CD14-positive monocyte (primary cell): ENCODE measurements at regions of chr20 and their contacts with region 1.

Region 1: DNA sequence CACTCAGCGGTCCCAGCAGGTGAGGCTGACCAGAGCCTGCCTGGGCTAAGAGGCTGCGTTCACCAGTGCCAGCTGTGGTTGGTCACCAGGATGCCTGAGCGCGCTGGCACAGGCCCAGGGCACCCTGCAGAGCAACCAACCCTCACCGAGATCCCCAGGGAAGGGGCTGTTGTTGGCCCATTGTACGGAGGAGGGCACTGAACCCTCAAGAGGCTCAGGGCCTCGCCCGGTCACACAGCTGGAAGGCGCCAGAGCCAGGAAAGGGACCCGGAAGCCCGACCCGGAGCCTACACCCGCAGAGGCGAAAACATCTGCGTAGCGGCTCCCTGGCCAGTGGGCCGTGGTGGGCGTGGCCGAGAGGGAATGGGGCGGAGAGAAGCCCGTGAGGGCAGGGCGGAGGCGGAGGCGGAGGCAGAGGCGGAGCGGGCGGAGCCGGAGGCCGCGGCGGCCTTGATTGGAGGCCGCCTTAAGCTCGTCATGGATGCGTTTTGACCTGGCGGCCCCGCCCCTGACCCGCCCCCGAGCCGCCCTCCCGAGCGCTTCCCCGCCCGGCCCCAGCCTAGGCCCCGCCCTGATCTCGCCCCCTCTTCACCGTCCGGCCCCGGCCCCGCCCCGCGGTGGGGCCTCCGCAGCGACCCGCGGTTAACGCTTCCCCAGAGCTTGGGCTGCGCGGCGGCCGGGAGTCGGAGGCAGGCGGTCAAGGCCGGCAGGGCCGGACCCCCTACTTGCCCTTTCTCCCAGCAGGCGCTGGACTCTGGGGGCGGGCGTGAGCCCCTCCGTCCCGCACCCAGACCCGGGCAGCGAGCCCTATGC is 2.2 kb upstream of the MRGBP start:
- DNase-seq: peak; percentile 94 to 97 (median 95)
- H3K4me3 ChIP-seq: peak overlapping the region; percentile 54 to 88 (median 59)
- H3K4me3 Mint-ChIP-seq: peak overlapping the region; percentile 82 to 87
- H3K27ac ChIP-seq: peak overlapping the region; percentile 92 to 94
- H3K27ac Mint-ChIP-seq: peak overlapping the region; percentile 92 to 99 (median 94)
- H3K4me1 ChIP-seq: peaks cover 44 to 54% of the 10 kb centered on the region in 2 donors
- H3K4me1 Mint-ChIP-seq: peaks cover 44% of the 10 kb centered on the region
- H3K27me3 ChIP-seq: no peaks in the 10 kb centered on the region
- H3K27me3 Mint-ChIP-seq: peaks cover 0 to 1% (median under 1%) of the 10 kb centered on the region in 3 donors
- CTCF ChIP-seq: no peak

Region 2: GRCh38 chr20:62407221-62407992 is 386.7 kb before region 1 on chr20 and contains the start of gene CABLES2:
- intact Hi-C with region 1: loop called (anchors 5 to 10 kb)
- DNase-seq: peak; percentile 89 to 92 (median 90)
- H3K4me3 ChIP-seq: peak within 1 kb of the TSS; percentile 52 to 79 (median 54)
- H3K4me3 Mint-ChIP-seq: peak within 1 kb of the TSS; percentile 82 to 89
- H3K27ac ChIP-seq: peak within 1 kb of the TSS; percentile 6 to 74
- H3K27ac Mint-ChIP-seq: peak within 1 kb of the TSS in 6 of 7 donors; percentile 74 to 86 (median 81)
- H3K4me1 ChIP-seq: peaks cover 30 to 41% of the 10 kb centered on the region in 2 donors
- H3K4me1 Mint-ChIP-seq: peaks cover 34% of the 10 kb centered on the region
- H3K27me3 ChIP-seq: peaks cover 0 to 3% of the 10 kb centered on the region in 2 donors
- H3K27me3 Mint-ChIP-seq: peaks cover 12 to 17% (median 13%) of the 10 kb centered on the region in 3 donors
- CTCF ChIP-seq: no peak
- polyA plus RNA-seq, gene CABLES2: 0.60 to 4.0 (median 0.61) TPM

Region 3: GRCh38 chr20:62500237-62500864 is 293.8 kb before region 1 on chr20:
- intact Hi-C with region 1: loop called (anchors 1 to 5 kb)
- DNase-seq: peak; percentile 65 to 83 (median 72)
- H3K4me3 ChIP-seq: no peak overlapping the region
- H3K4me3 Mint-ChIP-seq: peak overlapping the region in 1 of 2 donors; percentile 2
- H3K27ac ChIP-seq: no peak overlapping the region
- H3K27ac Mint-ChIP-seq: peak overlapping the region; percentile 12 to 85 (median 51)
- H3K4me1 ChIP-seq: peaks cover 3 to 14% of the 10 kb centered on the region in 2 donors
- H3K4me1 Mint-ChIP-seq: peaks cover 20% of the 10 kb centered on the region
- H3K27me3 ChIP-seq: peaks cover 0 to 3% of the 10 kb centered on the region in 2 donors
- H3K27me3 Mint-ChIP-seq: peaks cover 6 to 8% (median 6%) of the 10 kb centered on the region in 3 donors
- CTCF ChIP-seq: peak; percentile 80

Region 4: GRCh38 chr20:62623488-62624324 is 170.4 kb before region 1 on chr20:
- intact Hi-C with region 1: loop called in 1 of 2 experiments (anchors 2 kb)
- DNase-seq: peak; percentile 89 to 90 (median 89)
- H3K4me3 ChIP-seq: peak overlapping the region; percentile 0 to 65 (median 5)
- H3K4me3 Mint-ChIP-seq: peak overlapping the region; percentile 67 to 82
- H3K27ac ChIP-seq: peak overlapping the region; percentile 91 to 96
- H3K27ac Mint-ChIP-seq: peak overlapping the region; percentile 93 to 98 (median 95)
- H3K4me1 ChIP-seq: peaks cover 49 to 57% of the 10 kb centered on the region in 2 donors
- H3K4me1 Mint-ChIP-seq: peaks cover 49% of the 10 kb centered on the region
- H3K27me3 ChIP-seq: no peaks in the 10 kb centered on the region
- H3K27me3 Mint-ChIP-seq: peaks cover 0 to 3% (median 2%) of the 10 kb centered on the region in 3 donors
- CTCF ChIP-seq: no peak

Region 5: GRCh38 chr20:62668441-62669027 is 125.6 kb before region 1 on chr20:
- intact Hi-C with region 1: loop called (anchors 2 to 5 kb)
- DNase-seq: peak in 2 of 3 donors; percentile 69 to 73
- H3K4me3 ChIP-seq: no peak overlapping the region
- H3K4me3 Mint-ChIP-seq: no peak overlapping the region
- H3K27ac ChIP-seq: no peak overlapping the region
- H3K27ac Mint-ChIP-seq: no peak overlapping the region
- H3K4me1 ChIP-seq: peaks cover 32 to 65% of the 10 kb centered on the region in 2 donors
- H3K4me1 Mint-ChIP-seq: peaks cover 47% of the 10 kb centered on the region
- H3K27me3 ChIP-seq: no peaks in the 10 kb centered on the region
- H3K27me3 Mint-ChIP-seq: peaks cover 0 to 2% (median 1%) of the 10 kb centered on the region in 3 donors
- CTCF ChIP-seq: peak; percentile 96

Region 6: DNA sequence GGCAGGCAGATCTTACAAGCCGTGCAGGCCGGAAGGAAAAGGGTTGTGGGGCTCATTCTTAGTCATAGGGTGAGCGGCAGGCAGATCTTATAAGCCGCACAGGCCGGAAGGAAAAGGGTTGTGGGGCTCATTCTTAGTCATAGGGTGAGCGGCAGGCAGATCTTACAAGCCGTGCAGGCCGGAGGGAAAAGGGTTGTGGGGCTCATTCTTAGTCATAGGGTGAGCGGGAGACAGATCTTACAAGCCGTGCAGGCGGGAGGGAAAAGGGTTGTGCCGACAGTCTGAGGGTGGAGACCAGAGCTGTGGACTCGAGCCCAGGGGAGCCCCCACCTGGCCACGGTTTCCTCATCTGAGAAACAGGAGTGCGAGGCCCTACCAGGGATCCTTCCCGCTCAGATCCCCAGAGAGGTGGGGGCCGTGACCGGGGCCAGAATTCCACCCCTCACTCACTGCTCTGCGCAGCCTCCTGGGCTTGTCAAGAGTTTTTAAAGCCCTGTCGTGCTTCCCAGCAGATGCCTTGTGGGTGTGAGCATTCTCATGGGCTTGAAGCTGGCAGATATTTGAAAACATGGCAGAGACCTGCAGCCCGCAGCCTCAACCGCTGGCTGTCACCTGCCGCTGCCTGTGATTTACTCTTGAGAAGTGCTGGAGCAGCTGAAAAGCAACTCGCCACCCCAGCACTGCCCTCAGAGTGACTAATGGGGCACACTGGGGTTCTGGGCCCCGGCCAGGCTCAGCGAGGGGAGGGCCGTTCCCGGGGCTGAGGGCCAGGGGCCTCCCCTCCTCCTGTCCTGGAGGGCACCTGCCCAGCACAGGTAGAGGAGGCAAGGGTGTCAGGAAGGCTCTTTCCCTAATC is 53.6 kb before region 1 on chr20:
- intact Hi-C with region 1: loop called in 1 of 2 experiments (anchors 5 kb)
- DNase-seq: peak; percentile 92 to 99 (median 96)
- H3K4me3 ChIP-seq: peak overlapping the region in 2 of 3 experiments; percentile 10 to 72
- H3K4me3 Mint-ChIP-seq: peak overlapping the region; percentile 68 to 77
- H3K27ac ChIP-seq: peak overlapping the region; percentile 93 to 99
- H3K27ac Mint-ChIP-seq: peak overlapping the region; percentile 94 to 99 (median 97)
- H3K4me1 ChIP-seq: peaks cover 41 to 65% of the 10 kb centered on the region in 2 donors
- H3K4me1 Mint-ChIP-seq: peaks cover 57% of the 10 kb centered on the region
- H3K27me3 ChIP-seq: no peaks in the 10 kb centered on the region
- H3K27me3 Mint-ChIP-seq: peaks cover 1 to 7% (median 2%) of the 10 kb centered on the region in 3 donors
- CTCF ChIP-seq: no peak

Region 7: DNA sequence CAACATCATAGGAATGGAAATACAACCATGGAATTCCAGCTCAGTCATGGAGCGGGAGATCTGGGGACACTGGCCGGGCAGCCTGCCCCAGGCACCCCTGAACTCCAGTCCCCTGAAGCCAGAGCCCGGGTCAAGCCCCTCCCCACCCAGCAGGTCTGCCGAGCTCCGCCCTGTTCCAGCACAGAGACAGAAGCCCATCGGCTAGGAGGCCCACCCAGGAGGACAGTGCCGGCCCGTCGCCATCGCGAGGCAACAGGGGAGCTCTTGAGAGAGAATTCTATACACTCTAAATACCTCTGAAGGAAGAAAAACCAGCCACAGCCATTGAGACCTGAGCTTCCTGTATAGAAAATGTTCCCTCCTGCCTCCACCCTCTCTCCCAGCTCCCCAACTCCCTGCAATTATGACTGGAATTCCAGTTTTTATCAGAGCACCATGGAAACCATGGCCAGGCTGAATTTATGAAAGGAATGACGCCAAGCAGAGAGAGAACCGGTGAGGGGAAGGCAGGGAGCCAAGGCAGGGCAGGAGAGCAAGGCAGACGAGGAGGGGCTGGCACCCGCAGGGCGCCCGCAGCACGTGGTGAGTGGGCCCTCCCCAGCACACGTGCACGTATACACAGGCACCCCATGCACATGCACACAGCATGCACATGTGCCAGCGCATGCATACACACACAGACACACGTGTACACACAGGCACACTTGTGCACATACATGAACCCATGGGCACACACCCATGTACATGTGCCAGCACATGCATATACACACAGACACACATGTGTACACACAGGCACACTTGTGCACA is 25.4 kb before region 1 on chr20:
- intact Hi-C with region 1: no loop called
- DNase-seq: no peak
- H3K4me3 ChIP-seq: no peak overlapping the region
- H3K4me3 Mint-ChIP-seq: no peak overlapping the region
- H3K27ac ChIP-seq: no peak overlapping the region
- H3K27ac Mint-ChIP-seq: peak overlapping the region in 1 of 7 donors; percentile 68
- H3K4me1 ChIP-seq: peaks cover 15 to 18% of the 10 kb centered on the region in 2 donors
- H3K4me1 Mint-ChIP-seq: peaks cover 21% of the 10 kb centered on the region
- H3K27me3 ChIP-seq: no peaks in the 10 kb centered on the region
- H3K27me3 Mint-ChIP-seq: peaks cover 1 to 18% (median 12%) of the 10 kb centered on the region in 3 donors
- CTCF ChIP-seq: no peak

Region 8: DNA sequence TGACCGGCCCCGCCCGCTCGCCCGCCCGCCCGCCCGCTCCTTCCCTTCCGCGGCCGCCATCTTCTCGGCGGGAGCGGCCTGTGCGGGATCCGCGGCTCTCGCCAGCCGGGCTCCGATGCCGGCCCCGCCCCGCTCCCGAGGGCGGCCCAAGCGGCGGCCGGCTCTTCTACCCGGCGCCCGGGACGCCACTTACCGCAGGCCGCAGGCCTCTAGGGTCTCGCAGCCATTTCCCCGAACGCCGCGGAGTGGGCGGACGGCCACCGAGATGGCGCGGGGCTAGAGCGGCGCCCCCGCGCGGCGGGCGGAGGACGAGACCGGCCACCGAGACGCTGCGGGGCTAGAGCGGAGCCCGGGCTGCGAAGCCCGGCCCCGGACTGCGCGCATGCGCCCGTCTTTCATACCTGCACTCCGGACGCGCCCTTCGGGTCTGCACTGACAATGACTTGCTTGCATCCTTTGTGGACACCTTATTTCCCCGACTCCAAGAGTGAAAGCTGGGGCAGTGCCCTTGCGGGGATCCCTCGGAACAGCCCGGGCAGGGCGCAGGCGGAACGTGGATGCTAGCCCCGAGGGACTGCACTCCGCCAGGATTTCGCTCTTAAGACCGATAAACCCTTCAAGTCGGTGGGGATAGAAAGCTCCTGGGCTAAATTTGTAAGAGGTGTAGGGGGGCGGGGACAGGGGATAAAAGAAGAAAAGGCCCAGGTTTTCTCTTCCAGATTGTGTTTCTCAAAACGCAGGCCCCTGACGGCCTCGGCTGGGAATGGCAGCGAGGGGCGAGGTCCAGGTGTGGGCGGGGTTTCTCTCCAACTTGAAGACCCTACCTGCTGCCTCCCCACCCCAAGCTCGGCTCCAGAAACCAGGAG is 132.4 kb after region 1 on chr20 and contains the start of gene DIDO1:
- intact Hi-C with region 1: loop called in 1 of 2 experiments (anchors 10 kb)
- DNase-seq: peak; percentile 76 to 84 (median 78)
- H3K4me3 ChIP-seq: peak within 1 kb of the TSS; percentile 84 to 91 (median 88)
- H3K4me3 Mint-ChIP-seq: peak within 1 kb of the TSS; percentile 96 to 97
- H3K27ac ChIP-seq: peak within 1 kb of the TSS; percentile 94 to 97
- H3K27ac Mint-ChIP-seq: peak within 1 kb of the TSS; percentile 91 to 96 (median 95)
- H3K4me1 ChIP-seq: peaks cover 47 to 60% of the 10 kb centered on the region in 2 donors
- H3K4me1 Mint-ChIP-seq: peaks cover 58% of the 10 kb centered on the region
- H3K27me3 ChIP-seq: no peaks in the 10 kb centered on the region
- H3K27me3 Mint-ChIP-seq: no peaks in the 10 kb centered on the region
- CTCF ChIP-seq: peak; percentile 84
- polyA plus RNA-seq, gene DIDO1: 8.5 to 23.8 (median 12.9) TPM